Activated CD8-positive, alpha-beta T cell treated with anti-CD3 and anti-CD28 coated beads, Interleukin-2, amount 10 ng/mL, durations not matched to agents 7 days and 5 days (primary cell): ENCODE measurements at regions of chr16 and their contacts with region 1.

Region 1: GRCh38 chr16:72124761-72125634 is 31.4 kb downstream of the DHX38 start:
- DNase-seq: peak; percentile 76
- ATAC-seq: peak; percentile 79
- H3K4me3 Mint-ChIP-seq: no peak overlapping the region
- H3K27ac Mint-ChIP-seq: peak overlapping the region; percentile 36
- H3K4me1 Mint-ChIP-seq: peaks cover 13% of the 10 kb centered on the region
- H3K27me3 Mint-ChIP-seq: no peaks in the 10 kb centered on the region

Region 2: DNA sequence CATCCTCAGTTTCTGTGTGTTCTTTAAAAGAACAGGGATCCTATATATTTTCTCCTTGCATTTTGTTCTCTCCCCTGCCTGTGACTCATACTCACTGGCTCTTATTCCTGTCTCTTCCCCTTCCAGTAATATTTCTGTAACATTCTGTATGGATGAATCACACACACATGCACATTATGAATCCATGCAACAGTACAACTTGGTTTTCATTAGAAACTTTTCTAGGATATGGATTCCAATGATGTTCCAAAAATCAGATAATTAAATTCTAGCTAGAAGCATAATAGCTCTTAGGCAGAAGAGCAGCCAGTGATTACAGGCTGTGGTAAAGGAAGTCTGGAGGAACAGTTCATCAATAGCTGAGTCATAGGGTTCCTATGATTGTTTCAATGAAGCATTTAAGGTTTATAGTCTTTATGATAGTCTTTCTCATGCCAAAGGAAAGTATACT is 166.6 kb after region 1 on chr16:
- CTCF ChIA-PET with region 1: no interaction called
- POLR2A ChIA-PET with region 1: no interaction called
- DNase-seq: no peak
- ATAC-seq: no peak
- H3K4me3 Mint-ChIP-seq: no peak overlapping the region
- H3K27ac Mint-ChIP-seq: no peak overlapping the region
- H3K4me1 Mint-ChIP-seq: no peaks in the 10 kb centered on the region
- H3K27me3 Mint-ChIP-seq: no peaks in the 10 kb centered on the region

Region 3: DNA sequence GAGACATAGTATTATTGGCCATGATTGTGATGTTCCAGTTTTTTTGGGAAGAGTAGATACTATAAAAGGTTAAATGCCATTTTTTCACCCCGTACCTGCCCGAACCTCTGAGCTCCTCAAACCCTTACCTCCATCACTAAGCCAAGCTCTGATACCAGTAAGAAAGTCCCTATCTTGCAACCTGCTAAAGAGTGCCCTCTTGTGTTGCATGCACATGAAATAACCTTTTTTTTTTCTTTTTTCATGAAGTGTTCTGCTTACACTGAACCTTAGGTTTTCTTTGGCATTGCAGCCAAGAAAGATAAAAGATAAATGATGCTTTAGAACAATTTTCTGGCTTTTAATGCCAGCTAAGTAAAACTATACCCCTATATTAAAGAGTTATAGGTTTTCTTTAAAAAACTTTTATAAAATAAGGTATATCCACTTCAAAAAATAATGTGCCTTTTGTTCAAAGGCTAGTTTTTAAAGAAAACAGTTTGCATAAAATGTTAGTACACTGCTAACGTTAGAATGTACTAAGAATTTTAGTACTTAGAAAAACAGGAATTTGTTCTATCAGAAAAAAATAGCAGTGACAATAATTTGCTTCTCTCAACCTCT is 342.3 kb after region 1 on chr16:
- CTCF ChIA-PET with region 1: interaction called, 20 read pairs
- POLR2A ChIA-PET with region 1: no interaction called
- DNase-seq: peak; percentile 27
- ATAC-seq: no peak
- H3K4me3 Mint-ChIP-seq: no peak overlapping the region
- H3K27ac Mint-ChIP-seq: no peak overlapping the region
- H3K4me1 Mint-ChIP-seq: no peaks in the 10 kb centered on the region
- H3K27me3 Mint-ChIP-seq: no peaks in the 10 kb centered on the region

Region 4: GRCh38 chr16:72723781-72724180 is 598.8 kb after region 1 on chr16:
- CTCF ChIA-PET with region 1: no interaction called
- POLR2A ChIA-PET with region 1: no interaction called
- DNase-seq: no peak
- ATAC-seq: no peak
- H3K4me3 Mint-ChIP-seq: no peak overlapping the region
- H3K27ac Mint-ChIP-seq: no peak overlapping the region
- H3K4me1 Mint-ChIP-seq: no peaks in the 10 kb centered on the region
- H3K27me3 Mint-ChIP-seq: no peaks in the 10 kb centered on the region